ENCODE measurements at regions of chr11 and their contacts with region 1.

Region 1: DNA sequence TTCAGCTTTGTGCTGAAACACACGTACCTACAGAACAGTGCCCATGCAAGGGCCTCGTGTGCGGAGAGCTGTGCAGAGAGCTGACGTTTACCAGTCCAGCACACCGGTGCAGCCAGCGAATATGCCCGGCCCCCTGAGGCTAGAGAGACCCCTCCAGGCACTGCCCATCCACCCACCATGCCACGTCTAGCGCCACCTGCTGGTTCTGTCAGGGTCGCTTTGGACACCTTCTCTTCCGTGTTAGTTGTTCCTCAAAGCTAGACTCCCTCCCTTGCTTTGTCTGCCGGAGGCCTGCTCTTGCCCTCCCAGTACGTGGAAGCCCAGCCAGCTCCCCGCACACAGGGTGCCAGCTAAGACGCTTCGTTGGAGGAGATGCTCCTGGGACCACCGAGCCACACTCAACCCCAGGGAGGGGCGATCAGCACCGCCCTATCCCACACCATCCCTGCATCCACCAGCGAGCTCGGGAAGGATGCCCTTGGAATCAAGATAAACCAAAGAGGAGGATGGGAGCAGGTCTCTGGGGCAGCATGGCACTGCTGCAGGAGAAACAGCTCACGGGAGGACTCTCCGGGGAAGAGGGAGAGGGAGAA is 43.4 kb downstream of the CPT1A start:
- DNase-seq: peak in 3 of 5 donors; percentile 17 to 37 (median 26)
- H3K4me3 ChIP-seq: no peak overlapping the region
- H3K4me3 Mint-ChIP-seq: peak overlapping the region in 1 of 8 donors; percentile 11
- H3K27ac ChIP-seq: no peak overlapping the region
- H3K27ac Mint-ChIP-seq: no peak overlapping the region
- H3K4me1 ChIP-seq: no peaks in the 10 kb centered on the region
- H3K4me1 Mint-ChIP-seq: peaks cover 0 to 1% (median 0%) of the 10 kb centered on the region in 4 donors
- H3K27me3 ChIP-seq: no peaks in the 10 kb centered on the region
- H3K27me3 Mint-ChIP-seq: no peaks in the 10 kb centered on the region

Region 2: GRCh38 chr11:68632802-68633201 is 165.5 kb before region 1 on chr11:
- CTCF ChIA-PET with region 1: no interaction called
- POLR2A ChIA-PET with region 1: no interaction called
- intact Hi-C with region 1: loop called (anchors 5 kb)
- DNase-seq: peak in 4 of 5 donors; percentile 39 to 45 (median 41)
- H3K4me3 ChIP-seq: no peak overlapping the region
- H3K4me3 Mint-ChIP-seq: no peak overlapping the region
- H3K27ac ChIP-seq: no peak overlapping the region
- H3K27ac Mint-ChIP-seq: no peak overlapping the region
- H3K4me1 ChIP-seq: no peaks in the 10 kb centered on the region
- H3K4me1 Mint-ChIP-seq: no peaks in the 10 kb centered on the region
- H3K27me3 ChIP-seq: no peaks in the 10 kb centered on the region
- H3K27me3 Mint-ChIP-seq: peaks cover 0 to 17% of the 10 kb centered on the region in 2 donors

Measured in CD4-positive, alpha-beta memory T cell (primary cell).